Mammary epithelial cell (primary cell): ENCODE measurements at regions of chr12 and their contacts with region 1.

Region 1: DNA sequence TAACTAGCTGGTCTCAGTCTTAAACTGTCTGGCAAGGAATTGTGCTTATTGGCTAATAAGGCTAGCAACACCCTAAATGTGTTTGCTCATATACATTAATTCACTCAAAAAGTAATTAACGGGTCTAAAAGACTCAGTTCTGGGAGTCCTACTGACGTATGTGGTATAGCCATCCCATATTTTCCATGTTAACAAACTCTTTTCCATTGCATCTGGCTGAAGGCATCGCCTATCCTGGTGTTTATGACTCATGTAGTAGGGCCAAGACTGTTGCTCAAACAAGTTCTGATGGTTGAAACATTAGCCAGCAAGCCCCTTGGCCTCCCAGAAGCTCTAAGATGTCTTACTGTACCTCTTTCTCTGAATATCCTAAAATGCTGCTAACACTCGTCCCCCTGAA is 98.5 kb downstream of the PHLDA1 start:
- DNase-seq: peak; percentile 81
- H3K4me3 ChIP-seq: no peak overlapping the region
- H3K27ac ChIP-seq: peak overlapping the region; percentile 97
- H3K4me1 ChIP-seq: peaks cover 29% of the 10 kb centered on the region
- H3K27me3 ChIP-seq: no peaks in the 10 kb centered on the region
- CTCF ChIP-seq: no peak

Region 2: DNA sequence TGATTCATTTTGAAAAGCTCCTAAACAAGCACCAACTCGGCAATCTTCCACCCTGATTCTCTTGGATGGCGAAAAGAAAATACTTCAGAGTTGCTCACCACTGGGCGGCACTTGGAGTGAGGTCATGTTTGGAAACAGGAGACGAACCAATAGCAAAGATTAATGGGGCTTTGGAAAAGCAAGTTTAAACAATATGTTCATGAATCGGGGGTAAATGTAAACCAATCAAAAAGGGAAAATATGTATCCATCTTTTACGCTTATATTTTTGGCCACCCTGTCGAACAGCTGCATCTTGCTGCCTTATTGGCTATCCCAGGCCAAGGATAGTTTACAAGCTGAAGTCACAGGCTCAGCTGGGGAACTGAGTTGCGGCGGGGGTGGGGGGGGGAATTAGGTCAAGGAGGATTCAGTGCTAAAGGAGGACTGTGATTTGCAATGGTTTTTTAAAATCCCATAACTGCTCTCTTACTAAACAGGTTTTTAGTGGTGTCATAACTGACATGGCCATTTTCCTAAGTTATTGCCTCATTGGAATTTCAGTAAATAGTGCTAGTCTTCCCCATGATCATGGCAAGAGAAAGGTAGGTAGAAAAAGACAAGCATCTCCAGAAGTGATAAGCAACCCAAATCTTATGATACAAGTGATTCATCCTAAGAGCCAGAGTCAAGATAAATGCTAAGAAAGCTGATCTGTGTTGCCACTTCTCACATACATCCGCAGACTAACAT is 112.1 kb before region 1 on chr12:
- CTCF ChIA-PET with region 1: no interaction called
- dilution Hi-C with region 1: no loop called
- in situ Hi-C with region 1: no loop called
- intact Hi-C with region 1: loop called (anchors 5 kb)
- DNase-seq: peak; percentile 79
- H3K4me3 ChIP-seq: no peak overlapping the region
- H3K27ac ChIP-seq: peak overlapping the region; percentile 44
- H3K4me1 ChIP-seq: peaks cover 52% of the 10 kb centered on the region
- H3K27me3 ChIP-seq: no peaks in the 10 kb centered on the region
- CTCF ChIP-seq: peak in 1 of 2 donors; percentile 40

Region 3: DNA sequence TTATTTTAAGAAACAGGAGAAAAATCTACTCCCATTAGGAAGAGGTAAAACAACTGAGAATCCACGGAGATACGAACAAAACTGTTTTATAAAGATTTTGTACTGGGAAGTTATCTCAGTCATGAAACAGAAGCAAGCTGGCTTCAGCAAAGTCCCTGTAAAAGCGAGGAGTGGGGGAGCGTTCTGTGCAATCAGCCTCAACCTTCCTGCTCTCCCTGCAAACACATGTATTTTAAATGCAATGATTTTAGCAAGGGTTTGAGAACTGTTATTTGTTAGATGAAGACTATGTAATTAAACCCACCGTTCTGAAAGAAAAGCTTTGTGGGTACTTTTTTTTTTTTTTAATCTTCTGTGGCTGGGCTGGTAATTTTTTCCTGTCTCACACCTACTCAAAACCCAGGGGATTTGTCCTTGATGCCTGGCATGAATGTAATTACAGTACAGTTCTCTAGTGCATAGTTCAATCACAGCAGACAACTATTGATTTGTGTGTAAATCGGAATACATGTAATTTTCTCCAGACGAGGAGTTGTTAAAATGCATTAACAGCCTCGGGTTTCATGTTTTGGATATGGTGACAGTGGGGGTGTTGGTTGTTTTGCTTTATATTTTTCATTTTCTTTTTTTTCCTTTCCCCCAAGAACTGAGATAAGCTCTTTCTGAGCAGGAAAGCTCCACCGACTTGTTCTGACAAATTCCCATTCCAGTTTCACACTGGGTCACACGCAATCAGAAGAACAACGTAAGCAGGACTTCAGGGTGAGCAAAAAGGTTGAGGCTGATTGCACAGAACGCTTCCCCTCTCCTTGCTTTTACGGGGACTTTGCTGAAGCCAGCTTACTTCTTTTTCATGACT is 55.1 kb before region 1 on chr12:
- CTCF ChIA-PET with region 1: no interaction called
- dilution Hi-C with region 1: no loop called
- in situ Hi-C with region 1: no loop called
- intact Hi-C with region 1: loop called (anchors 1 kb)
- DNase-seq: peak; percentile 74
- H3K4me3 ChIP-seq: no peak overlapping the region
- H3K27ac ChIP-seq: peak overlapping the region; percentile 93
- H3K4me1 ChIP-seq: peaks cover 28% of the 10 kb centered on the region
- H3K27me3 ChIP-seq: no peaks in the 10 kb centered on the region
- CTCF ChIP-seq: no peak

Region 4: DNA sequence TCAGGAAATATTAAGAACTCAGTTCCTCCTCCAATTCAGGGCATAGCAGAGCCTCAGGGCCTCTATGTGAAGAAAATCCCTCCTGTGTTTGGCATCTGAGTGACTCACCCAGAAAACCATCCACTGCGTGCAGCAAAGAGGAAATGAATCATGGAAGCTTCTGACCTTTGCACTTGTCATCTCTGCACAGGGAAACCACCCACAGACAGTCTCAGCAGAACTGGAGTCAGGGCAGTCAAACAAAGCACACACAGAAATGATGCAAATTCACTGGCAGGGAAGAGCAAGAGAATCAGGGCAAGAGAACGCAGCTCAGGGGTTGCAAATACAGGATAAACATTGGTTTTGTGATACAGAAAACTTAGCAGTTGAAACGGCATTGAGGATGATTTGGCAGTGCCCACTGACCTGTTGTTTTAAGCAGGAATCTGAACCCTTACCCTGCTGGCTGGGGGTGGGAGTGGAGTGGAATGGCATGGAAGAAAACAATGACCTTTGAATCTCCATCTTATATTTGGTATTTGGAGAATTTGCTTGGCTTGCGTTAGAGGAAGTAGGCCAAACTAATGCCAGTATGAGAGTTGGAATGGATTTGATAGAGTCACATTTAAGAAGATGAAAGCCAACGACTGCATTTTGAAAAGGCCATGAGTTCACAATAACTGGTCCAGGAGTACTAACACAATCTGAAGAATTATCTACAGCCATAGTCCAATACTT is 45.0 kb after region 1 on chr12:
- CTCF ChIA-PET with region 1: no interaction called
- dilution Hi-C with region 1: no loop called
- in situ Hi-C with region 1: no loop called
- intact Hi-C with region 1: no loop called
- DNase-seq: peak; percentile 99
- H3K4me3 ChIP-seq: no peak overlapping the region
- H3K27ac ChIP-seq: peak overlapping the region; percentile 96
- H3K4me1 ChIP-seq: peaks cover 37% of the 10 kb centered on the region
- H3K27me3 ChIP-seq: no peaks in the 10 kb centered on the region
- CTCF ChIP-seq: no peak